Activated B cell treated with CpG ODN at 0.5 μM for 24 hours (primary cell): ENCODE measurements at regions of chr1 and their contacts with region 1.

Region 1: DNA sequence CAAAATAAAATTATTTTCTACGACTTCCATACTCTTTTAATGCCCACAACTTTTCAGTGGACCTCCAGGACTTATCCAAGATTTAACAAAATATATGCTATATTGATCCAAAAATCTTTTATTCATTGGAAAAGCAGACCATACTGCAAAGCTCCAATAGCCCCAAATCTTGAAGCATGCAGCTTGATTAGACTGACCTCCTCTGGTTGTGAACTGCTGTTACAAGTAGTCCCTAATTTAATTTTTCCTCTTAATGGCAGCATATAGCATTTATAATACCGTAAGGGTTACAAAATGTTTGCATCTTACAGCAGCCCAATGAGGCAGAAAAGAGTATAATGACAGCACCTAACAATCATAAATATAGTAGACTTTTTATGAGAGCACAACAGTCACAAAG is 49.8 kb downstream of the TPR start:
- DNase-seq: no peak
- ATAC-seq: no peak
- H3K4me3 Mint-ChIP-seq: no peak overlapping the region
- H3K27ac Mint-ChIP-seq: no peak overlapping the region
- H3K4me1 Mint-ChIP-seq: no peaks in the 10 kb centered on the region
- H3K27me3 Mint-ChIP-seq: no peaks in the 10 kb centered on the region
- CTCF ChIP-seq: no peak

Region 2: DNA sequence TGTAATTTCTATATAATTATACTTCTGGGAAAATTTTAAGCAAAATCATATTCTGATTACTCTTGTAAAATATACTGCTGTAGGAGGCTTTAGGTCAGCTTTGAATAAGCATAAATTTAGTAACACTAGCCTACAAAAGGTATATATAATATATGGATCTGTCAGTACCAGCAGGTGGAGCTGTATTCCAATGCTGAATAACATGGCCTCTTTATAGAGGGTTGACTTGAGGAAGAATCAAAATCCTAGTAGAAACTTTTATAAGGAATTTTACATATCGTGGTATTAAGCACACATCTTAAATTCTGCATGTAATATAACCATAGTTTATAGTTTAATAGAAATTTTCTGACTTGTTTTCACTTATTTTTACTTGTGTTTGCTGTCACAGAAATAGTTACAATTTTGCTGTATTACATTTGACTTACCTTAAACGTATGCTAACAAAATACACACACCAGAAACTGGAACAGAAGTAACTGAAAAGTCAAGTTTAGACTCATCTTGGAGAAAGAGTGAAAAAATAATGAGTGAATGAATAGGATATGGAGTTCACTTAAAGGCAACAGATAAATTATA is 511.7 kb before region 1 on chr1:
- CTCF ChIA-PET with region 1: no interaction called
- POLR2A ChIA-PET with region 1: no interaction called
- intact Hi-C with region 1: loop called (anchors 5 kb)
- DNase-seq: no peak
- ATAC-seq: no peak
- H3K4me3 Mint-ChIP-seq: no peak overlapping the region
- H3K27ac Mint-ChIP-seq: no peak overlapping the region
- H3K4me1 Mint-ChIP-seq: no peaks in the 10 kb centered on the region
- H3K27me3 Mint-ChIP-seq: no peaks in the 10 kb centered on the region
- CTCF ChIP-seq: no peak

Region 3: GRCh38 chr1:186286615-186287317 is 38.5 kb before region 1 on chr1:
- CTCF ChIA-PET with region 1: no interaction called
- POLR2A ChIA-PET with region 1: no interaction called
- intact Hi-C with region 1: no loop called
- DNase-seq: no peak
- ATAC-seq: no peak
- H3K4me3 Mint-ChIP-seq: no peak overlapping the region
- H3K27ac Mint-ChIP-seq: no peak overlapping the region
- H3K4me1 Mint-ChIP-seq: no peaks in the 10 kb centered on the region
- H3K27me3 Mint-ChIP-seq: peaks cover 14% of the 10 kb centered on the region
- CTCF ChIP-seq: no peak

Region 4: DNA sequence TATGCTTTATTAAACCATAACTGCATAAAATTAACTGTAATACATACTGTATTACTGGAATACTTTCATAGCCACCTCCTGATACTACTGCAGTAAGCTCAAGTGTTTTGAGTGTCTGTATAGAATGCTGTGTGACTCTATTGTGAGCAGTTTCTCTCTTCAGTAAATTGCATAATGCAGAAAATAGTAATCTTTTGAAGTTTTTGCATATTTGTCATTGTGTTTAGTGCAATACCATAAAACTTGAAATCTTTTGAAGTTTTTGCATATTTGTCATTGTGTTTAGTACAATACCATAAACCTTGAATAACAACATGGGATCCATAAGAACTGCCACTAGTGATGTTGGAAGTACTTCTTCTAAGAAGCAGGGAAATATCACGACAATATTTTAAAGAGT is 38.7 kb after region 1 on chr1:
- CTCF ChIA-PET with region 1: no interaction called
- POLR2A ChIA-PET with region 1: no interaction called
- intact Hi-C with region 1: loop called (anchors 2 kb)
- DNase-seq: no peak
- ATAC-seq: no peak
- H3K4me3 Mint-ChIP-seq: no peak overlapping the region
- H3K27ac Mint-ChIP-seq: no peak overlapping the region
- H3K4me1 Mint-ChIP-seq: no peaks in the 10 kb centered on the region
- H3K27me3 Mint-ChIP-seq: no peaks in the 10 kb centered on the region
- CTCF ChIP-seq: no peak

Region 5: GRCh38 chr1:186420923-186421322 is 95.7 kb after region 1 on chr1:
- CTCF ChIA-PET with region 1: no interaction called
- POLR2A ChIA-PET with region 1: no interaction called
- intact Hi-C with region 1: no loop called
- DNase-seq: no peak
- ATAC-seq: no peak
- H3K4me3 Mint-ChIP-seq: no peak overlapping the region
- H3K27ac Mint-ChIP-seq: no peak overlapping the region
- H3K4me1 Mint-ChIP-seq: no peaks in the 10 kb centered on the region
- H3K27me3 Mint-ChIP-seq: no peaks in the 10 kb centered on the region
- CTCF ChIP-seq: no peak